PC-3 (cell line): ENCODE measurements at regions of chr20 and their contacts with region 1.

Region 1: DNA sequence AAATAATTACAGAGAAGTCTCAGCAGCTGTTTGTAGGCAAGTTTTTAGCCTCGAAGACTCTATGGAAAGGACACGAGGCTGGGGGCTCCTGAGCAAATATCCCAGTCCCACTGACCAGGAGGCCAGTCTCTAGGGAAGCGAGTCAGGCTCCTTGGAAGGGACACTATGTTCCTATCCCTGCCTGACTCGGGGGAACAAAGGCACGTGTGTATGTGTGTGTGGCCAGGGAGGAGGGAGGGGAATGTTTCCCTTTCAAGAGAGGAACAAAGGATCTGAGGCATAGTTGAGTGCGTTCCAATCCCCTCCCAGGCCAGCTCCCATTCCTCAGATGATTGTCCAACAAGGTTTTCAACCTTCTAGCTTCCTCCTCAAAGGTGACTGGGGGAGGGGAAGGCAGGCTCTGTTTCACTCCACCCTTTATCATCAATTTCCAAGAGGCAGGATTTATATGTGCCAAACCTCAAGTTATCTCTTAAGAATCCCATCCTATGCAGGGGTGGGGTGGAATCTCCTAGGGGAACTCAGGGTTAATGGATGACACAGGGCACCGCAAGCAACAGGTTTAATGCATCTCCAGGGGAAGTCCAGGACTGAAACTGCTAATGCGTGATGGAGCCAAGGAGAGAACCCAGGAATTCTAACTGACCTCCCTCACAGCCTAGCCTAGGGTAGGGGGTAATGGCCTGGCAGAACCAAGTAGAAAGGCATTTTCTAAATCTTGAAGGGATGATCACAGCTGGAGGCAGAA is 9.9 kb downstream of the BCL2L1 start:
- DNase-seq: peak; percentile 97
- ATAC-seq: peak; percentile 44
- H3K4me3 ChIP-seq: peak overlapping the region; percentile 59
- H3K27ac ChIP-seq: peak overlapping the region; percentile 99
- H3K4me1 ChIP-seq: peaks cover 92% of the 10 kb centered on the region
- H3K27me3 ChIP-seq: no peaks in the 10 kb centered on the region
- CTCF ChIP-seq: no peak

Region 2: GRCh38 chr20:31674895-31675827 is 37.6 kb before region 1 on chr20:
- CTCF ChIA-PET with region 1: no interaction called
- POLR2A ChIA-PET with region 1: interaction called, 4 read pairs
- intact Hi-C with region 1: loop called (anchors 2 kb)
- DNase-seq: peak; percentile 86
- ATAC-seq: peak; percentile 71
- H3K4me3 ChIP-seq: no peak overlapping the region
- H3K27ac ChIP-seq: peak overlapping the region; percentile 57
- H3K4me1 ChIP-seq: peaks cover 26% of the 10 kb centered on the region
- H3K27me3 ChIP-seq: no peaks in the 10 kb centered on the region
- CTCF ChIP-seq: no peak

Region 3: GRCh38 chr20:31698803-31699718 is 13.7 kb before region 1 on chr20:
- CTCF ChIA-PET with region 1: no interaction called
- POLR2A ChIA-PET with region 1: interaction called, 20 read pairs
- intact Hi-C with region 1: loop called (anchors 1 kb)
- DNase-seq: peak; percentile 88
- ATAC-seq: peak; percentile 47
- H3K4me3 ChIP-seq: no peak overlapping the region
- H3K27ac ChIP-seq: peak overlapping the region; percentile 62
- H3K4me1 ChIP-seq: peaks cover 75% of the 10 kb centered on the region
- H3K27me3 ChIP-seq: no peaks in the 10 kb centered on the region
- CTCF ChIP-seq: no peak

Region 4: GRCh38 chr20:31951530-31952453 is 239.1 kb after region 1 on chr20 and contains the start of gene PDRG1:
- CTCF ChIA-PET with region 1: no interaction called
- POLR2A ChIA-PET with region 1: no interaction called
- intact Hi-C with region 1: no loop called
- DNase-seq: peak; percentile 97
- ATAC-seq: peak; percentile 99
- H3K4me3 ChIP-seq: peak within 1 kb of the TSS; percentile 98
- H3K27ac ChIP-seq: no peak within 1 kb of the TSS
- H3K4me1 ChIP-seq: peaks cover 9% of the 10 kb centered on the region
- H3K27me3 ChIP-seq: peaks cover 13% of the 10 kb centered on the region
- CTCF ChIP-seq: peak; percentile 93
- total RNA-seq, gene PDRG1: 11.7 and 12.3 TPM in 2 replicates